ENCODE measurements at regions of chr11 and their contacts with region 1.

Region 1: GRCh38 chr11:86719781-86720463 is 47.5 kb upstream of the ME3 start:
- DNase-seq: no peak
- H3K4me3 ChIP-seq: no peak overlapping the region
- H3K4me3 Mint-ChIP-seq: peak overlapping the region; percentile 2
- H3K27ac Mint-ChIP-seq: peak overlapping the region; percentile 81
- H3K4me1 ChIP-seq: peaks cover 47% of the 10 kb centered on the region
- H3K4me1 Mint-ChIP-seq: peaks cover 41% of the 10 kb centered on the region
- H3K27me3 ChIP-seq: no peaks in the 10 kb centered on the region
- H3K27me3 Mint-ChIP-seq: no peaks in the 10 kb centered on the region
- CTCF ChIP-seq: no peak

Region 2: DNA sequence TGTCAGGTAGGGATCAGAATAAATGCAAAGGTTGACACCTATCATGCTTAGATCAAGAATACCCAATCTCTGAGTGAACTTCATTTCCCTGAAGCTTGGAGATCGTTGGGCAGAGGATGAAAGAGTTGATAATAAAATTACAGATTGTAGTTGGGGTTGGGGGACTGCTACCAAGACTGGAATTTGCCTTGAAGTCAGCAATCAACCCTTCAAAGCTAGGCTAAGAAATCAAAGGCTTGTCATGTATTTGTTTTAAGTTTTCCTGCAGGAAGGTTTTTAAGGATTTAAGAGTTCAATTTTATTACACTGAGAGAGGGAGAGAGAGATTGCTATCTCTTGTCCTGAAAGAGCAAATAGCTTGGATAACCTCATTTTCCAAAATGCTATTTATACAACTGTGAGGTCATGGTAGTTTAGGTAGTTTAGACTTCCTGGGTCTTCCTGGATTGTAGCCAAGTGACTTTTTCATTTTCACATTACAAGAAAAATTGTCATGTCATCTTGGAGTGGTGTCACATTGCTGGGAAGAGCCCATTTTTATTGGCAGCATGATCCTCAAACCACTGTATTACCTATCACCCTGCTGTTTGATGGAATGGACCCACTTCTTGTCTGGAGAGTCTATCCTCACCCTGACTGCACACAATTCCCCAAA is 70.3 kb after region 1 on chr11:
- CTCF ChIA-PET with region 1: no interaction called
- POLR2A ChIA-PET with region 1: no interaction called
- intact Hi-C with region 1: loop called (anchors 2 kb)
- DNase-seq: peak; percentile 65 to 72
- H3K4me3 ChIP-seq: no peak overlapping the region
- H3K4me3 Mint-ChIP-seq: peak overlapping the region; percentile 30
- H3K27ac Mint-ChIP-seq: peak overlapping the region; percentile 79
- H3K4me1 ChIP-seq: peaks cover 88% of the 10 kb centered on the region
- H3K4me1 Mint-ChIP-seq: peaks cover 75% of the 10 kb centered on the region
- H3K27me3 ChIP-seq: no peaks in the 10 kb centered on the region
- H3K27me3 Mint-ChIP-seq: no peaks in the 10 kb centered on the region
- CTCF ChIP-seq: no peak

Measured in Caco-2 (cell line).